ENCODE measurements at regions of chr1 and their contacts with region 1.

Region 1: DNA sequence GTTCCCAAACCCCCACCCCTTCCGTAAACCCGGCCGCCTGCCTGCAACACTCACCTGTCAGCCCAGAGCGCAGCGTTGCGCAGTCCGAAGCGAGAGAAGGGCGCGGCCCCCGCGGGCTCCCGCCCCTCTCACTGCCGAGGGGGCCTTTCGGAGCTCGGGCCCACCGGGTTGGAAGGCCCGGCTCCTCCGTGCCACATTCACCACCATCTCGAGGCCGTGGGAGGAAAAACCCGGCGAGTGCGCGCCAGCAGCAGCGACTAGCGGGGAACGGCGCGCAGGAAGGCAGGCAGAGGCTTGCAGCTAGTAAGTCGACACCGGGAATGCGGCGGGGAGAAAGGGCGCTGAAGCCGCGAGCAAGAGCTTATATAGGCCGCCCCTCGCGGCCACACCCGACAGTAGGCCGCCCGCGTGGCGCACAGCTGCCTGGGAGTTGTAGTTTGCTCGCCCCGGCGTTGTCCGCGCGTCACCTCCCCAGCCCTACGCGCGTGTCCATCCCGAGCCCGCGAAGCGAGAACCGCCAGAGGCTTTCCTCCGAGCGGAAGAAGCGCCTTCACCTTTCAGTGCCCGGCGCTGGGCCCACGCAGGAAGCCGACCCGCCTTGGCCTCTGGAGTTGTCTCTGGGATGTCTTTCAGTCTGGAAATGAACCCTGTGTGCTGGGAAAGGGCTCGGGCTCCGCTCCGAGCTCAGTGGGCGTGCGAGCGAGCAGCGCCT is 10.4 kb upstream of the RAB42 start:
- DNase-seq: peak; percentile 93 to 99 (median 96)
- ATAC-seq: peak; percentile 92
- H3K4me3 ChIP-seq: peak overlapping the region; percentile 81
- H3K27ac ChIP-seq: peak overlapping the region; percentile 81
- H3K4me1 ChIP-seq: peaks cover 18 to 24% of the 10 kb centered on the region in 2 experiments; a peak in 4 of 5 replicates
- H3K27me3 ChIP-seq: no peaks in the 10 kb centered on the region
- CTCF ChIP-seq: peak in 2 of 3 experiments; percentile 1 to 25; a peak in 2 of 6 replicates
- EP300 ChIP-seq: peak; percentile 67
- POLR2A ChIP-seq: peak; percentile 100
- RAD21 ChIP-seq: peak in 1 of 2 experiments; percentile 21; a peak in 2 of 4 replicates

Region 2: DNA sequence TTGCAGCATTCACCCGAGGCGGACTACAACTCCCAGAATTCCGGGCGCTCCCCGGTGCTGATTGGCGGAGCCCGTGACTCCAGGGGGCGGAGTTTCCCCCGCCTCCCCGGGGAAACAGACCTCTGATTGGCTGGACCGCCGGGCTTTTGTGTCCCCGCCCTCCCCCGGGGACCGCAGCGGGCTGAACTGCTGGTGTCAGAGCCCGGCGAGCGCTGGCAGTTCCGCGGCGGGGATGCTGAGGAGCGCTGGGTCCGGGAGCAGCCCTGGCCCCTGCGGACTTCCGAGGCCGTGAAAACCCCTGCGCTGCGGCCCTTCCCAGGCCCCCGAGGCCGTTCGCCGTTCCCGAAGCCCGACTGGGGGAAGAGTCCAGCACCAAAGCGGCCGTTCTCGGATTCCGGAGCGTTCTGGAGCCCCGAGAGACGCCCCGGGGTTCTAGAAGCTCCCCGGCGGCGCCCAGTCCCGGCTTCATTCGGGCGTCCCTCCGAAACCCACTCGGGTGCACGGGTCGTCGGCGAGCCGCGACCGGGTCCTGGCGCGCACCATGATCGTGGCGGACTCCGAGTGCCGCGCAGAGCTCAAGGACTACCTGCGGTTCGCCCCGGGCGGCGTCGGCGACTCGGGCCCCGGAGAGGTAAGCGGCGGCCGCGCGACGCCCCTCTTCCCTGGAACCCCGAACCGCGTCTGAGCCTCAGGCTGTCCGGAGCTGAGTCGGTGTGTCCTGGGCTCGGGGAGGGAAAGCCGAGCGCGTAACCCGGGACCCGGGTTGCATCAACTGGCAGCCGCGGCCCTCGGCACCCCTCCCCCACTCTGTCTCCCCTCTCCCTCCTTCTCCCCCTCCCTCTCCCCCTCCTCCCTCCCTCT is 322.2 kb before region 1 on chr1 and contains the start of gene SESN2:
- CTCF ChIA-PET with region 1: no interaction called
- POLR2A ChIA-PET with region 1: interaction called, 13 read pairs
- in situ Hi-C with region 1: no loop called
- intact Hi-C with region 1: no loop called
- DNase-seq: peak; percentile 99 to 100 (median 100)
- ATAC-seq: peak; percentile 92
- H3K4me3 ChIP-seq: peak within 1 kb of the TSS; percentile 96
- H3K27ac ChIP-seq: peak within 1 kb of the TSS; percentile 90
- H3K4me1 ChIP-seq: peaks cover 52 to 64% of the 10 kb centered on the region in 2 experiments
- H3K27me3 ChIP-seq: no peaks in the 10 kb centered on the region
- CTCF ChIP-seq: no peak; a peak in 1 of 6 replicates
- EP300 ChIP-seq: no peak
- POLR2A ChIP-seq: peak; percentile 99
- RAD21 ChIP-seq: peak in 1 of 2 experiments; percentile 31; a peak in 1 of 4 replicates
- polyA plus RNA-seq, gene SESN2: 3.7 to 5.4 TPM

Region 3: DNA sequence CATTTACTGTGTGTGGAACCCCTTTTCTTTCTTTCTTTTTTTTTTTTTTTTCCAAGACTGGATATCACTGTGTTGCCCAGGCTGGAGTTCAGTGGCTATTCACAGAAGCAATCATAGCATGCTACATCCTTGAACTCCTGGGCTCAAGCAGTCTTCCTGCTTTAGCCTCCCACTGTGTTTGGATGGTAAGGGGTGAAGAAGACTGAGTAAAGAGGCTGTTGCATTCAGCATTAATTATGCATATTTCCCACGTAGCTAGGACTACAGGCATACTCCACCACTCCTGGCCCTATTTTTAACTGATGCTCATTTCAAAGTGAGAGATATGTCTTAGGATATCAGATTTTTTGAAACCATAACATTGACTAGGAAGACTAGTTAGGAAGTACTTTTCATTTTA is 172.6 kb before region 1 on chr1:
- CTCF ChIA-PET with region 1: no interaction called
- POLR2A ChIA-PET with region 1: interaction called, 26 read pairs
- in situ Hi-C with region 1: no loop called
- intact Hi-C with region 1: no loop called
- DNase-seq: no peak
- ATAC-seq: no peak
- H3K4me3 ChIP-seq: no peak overlapping the region
- H3K27ac ChIP-seq: no peak overlapping the region
- H3K4me1 ChIP-seq: peaks cover 3 to 23% of the 10 kb centered on the region in 2 experiments; a peak in 3 of 5 replicates
- H3K27me3 ChIP-seq: no peaks in the 10 kb centered on the region
- CTCF ChIP-seq: no peak
- EP300 ChIP-seq: no peak
- POLR2A ChIP-seq: no peak
- RAD21 ChIP-seq: no peak

Region 4: DNA sequence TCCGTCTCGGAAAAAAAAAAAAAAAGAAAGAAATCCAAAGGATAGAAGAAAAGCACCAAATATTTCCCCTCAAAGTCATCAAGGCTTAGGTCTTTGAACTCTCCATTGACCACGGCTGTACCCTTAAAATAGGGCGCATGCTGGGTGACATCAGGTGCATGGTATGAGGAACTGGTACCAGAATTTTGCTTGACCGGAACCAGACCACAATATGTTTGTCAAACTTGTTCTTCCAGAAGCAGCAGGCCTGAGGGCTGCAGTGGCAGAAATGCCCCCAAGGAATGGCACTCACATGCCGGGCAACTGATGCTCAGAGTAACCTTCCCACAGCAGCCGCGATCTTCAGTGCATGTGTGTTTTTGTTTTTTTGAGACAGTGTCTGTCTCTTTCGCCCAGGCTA is 54.8 kb before region 1 on chr1:
- CTCF ChIA-PET with region 1: no interaction called
- POLR2A ChIA-PET with region 1: interaction called, 73 read pairs
- in situ Hi-C with region 1: no loop called
- intact Hi-C with region 1: no loop called
- DNase-seq: no peak
- ATAC-seq: no peak
- H3K4me3 ChIP-seq: no peak overlapping the region
- H3K27ac ChIP-seq: no peak overlapping the region
- H3K4me1 ChIP-seq: peaks cover 19 to 24% of the 10 kb centered on the region in 2 experiments
- H3K27me3 ChIP-seq: no peaks in the 10 kb centered on the region
- CTCF ChIP-seq: no peak
- EP300 ChIP-seq: no peak
- POLR2A ChIP-seq: no peak
- RAD21 ChIP-seq: no peak

Region 5: DNA sequence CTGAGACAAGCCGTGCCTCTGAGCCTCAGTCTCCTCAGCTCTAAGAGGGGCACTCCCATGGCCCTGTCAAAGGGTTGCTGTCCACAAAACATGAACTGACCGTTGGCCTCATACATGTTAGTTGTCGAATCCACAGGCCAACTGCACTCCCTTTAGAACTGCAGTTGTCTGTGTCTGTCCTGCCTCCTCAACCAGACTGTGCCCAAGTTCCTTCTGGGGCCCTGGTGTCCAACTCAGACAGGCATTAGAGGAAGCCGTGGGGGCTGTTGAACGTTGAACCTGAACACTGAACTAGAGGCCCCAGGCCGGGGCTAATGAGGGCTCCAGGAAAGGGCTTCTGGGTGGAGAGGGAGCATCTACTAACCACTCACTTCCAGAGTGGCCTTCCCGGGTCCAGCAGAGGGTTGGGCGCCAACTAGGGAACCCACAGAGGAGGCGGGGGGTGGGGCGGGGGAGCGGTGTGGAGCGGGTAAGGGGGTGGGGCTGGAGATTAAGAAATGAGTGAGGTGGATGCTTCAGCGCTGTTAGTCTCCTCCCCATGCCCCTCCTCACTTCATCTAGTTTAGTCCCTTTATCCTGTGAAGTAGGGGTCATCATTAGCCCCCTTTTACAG is 10.1 kb after region 1 on chr1 and contains the start of gene RAB42:
- CTCF ChIA-PET with region 1: no interaction called
- POLR2A ChIA-PET with region 1: interaction called, 50 read pairs
- in situ Hi-C with region 1: no loop called
- intact Hi-C with region 1: no loop called
- DNase-seq: peak; percentile 19 to 84 (median 62)
- ATAC-seq: peak; percentile 33
- H3K4me3 ChIP-seq: no peak within 1 kb of the TSS
- H3K27ac ChIP-seq: no peak within 1 kb of the TSS
- H3K4me1 ChIP-seq: peaks cover 4 to 13% of the 10 kb centered on the region in 2 experiments
- H3K27me3 ChIP-seq: peaks cover 5 to 6% of the 10 kb centered on the region in 2 experiments; a peak in 3 of 5 replicates
- CTCF ChIP-seq: no peak
- EP300 ChIP-seq: no peak
- POLR2A ChIP-seq: no peak
- RAD21 ChIP-seq: no peak
- polyA plus RNA-seq, gene RAB42: not detected

Region 6: GRCh38 chr1:28736450-28737306 is 155.0 kb after region 1 on chr1 and contains the start of gene YTHDF2:
- CTCF ChIA-PET with region 1: no interaction called
- POLR2A ChIA-PET with region 1: interaction called, 24 read pairs
- in situ Hi-C with region 1: no loop called
- intact Hi-C with region 1: no loop called
- DNase-seq: peak; percentile 92 to 100 (median 96)
- ATAC-seq: peak; percentile 94
- H3K4me3 ChIP-seq: peak within 1 kb of the TSS; percentile 96
- H3K27ac ChIP-seq: peak within 1 kb of the TSS; percentile 92
- H3K4me1 ChIP-seq: peaks cover 18 to 24% of the 10 kb centered on the region in 2 experiments; a peak in 4 of 5 replicates
- H3K27me3 ChIP-seq: no peaks in the 10 kb centered on the region
- CTCF ChIP-seq: peak; percentile 82 to 95 (median 86)
- EP300 ChIP-seq: peak; percentile 42; the same call in 1 of the 2 replicates
- POLR2A ChIP-seq: peak; percentile 86
- RAD21 ChIP-seq: peak; percentile 36 to 54
- polyA plus RNA-seq, gene YTHDF2: 41.0 to 47.2 TPM

Measured in K562 (cell line).